AG04450 (cell line): ENCODE measurements at regions of chr3 and their contacts with region 1.

Region 1: GRCh38 chr3:50611464-50612233 is at the start of gene CISH:
- DNase-seq: peak; percentile 86
- H3K4me3 ChIP-seq: peak within 1 kb of the TSS; percentile 81
- H3K27ac ChIP-seq: peak within 1 kb of the TSS; percentile 39
- H3K27me3 ChIP-seq: no peaks in the 10 kb centered on the region
- CTCF ChIP-seq: peak; percentile 61
- polyA plus RNA-seq, gene CISH: 2.4 and 4.1 TPM in 2 replicates

Region 2: GRCh38 chr3:50192689-50193141 is 418.9 kb before region 1 on chr3:
- CTCF ChIA-PET with region 1: no interaction called
- POLR2A ChIA-PET with region 1: no interaction called
- DNase-seq: peak; percentile 15
- H3K4me3 ChIP-seq: no peak overlapping the region
- H3K27ac ChIP-seq: no peak overlapping the region
- H3K27me3 ChIP-seq: peaks cover 36% of the 10 kb centered on the region
- CTCF ChIP-seq: peak; percentile 93

Region 3: GRCh38 chr3:50568947-50569749 is 42.5 kb before region 1 on chr3 and contains the start of gene HEMK1:
- CTCF ChIA-PET with region 1: interaction called, 436 read pairs
- POLR2A ChIA-PET with region 1: interaction called, 48 read pairs
- DNase-seq: peak; percentile 83
- H3K4me3 ChIP-seq: peak within 1 kb of the TSS; percentile 99
- H3K27ac ChIP-seq: peak within 1 kb of the TSS; percentile 81
- H3K27me3 ChIP-seq: no peaks in the 10 kb centered on the region
- CTCF ChIP-seq: no peak
- polyA plus RNA-seq, gene HEMK1: 12.1 and 15.5 TPM in 2 replicates

Region 4: DNA sequence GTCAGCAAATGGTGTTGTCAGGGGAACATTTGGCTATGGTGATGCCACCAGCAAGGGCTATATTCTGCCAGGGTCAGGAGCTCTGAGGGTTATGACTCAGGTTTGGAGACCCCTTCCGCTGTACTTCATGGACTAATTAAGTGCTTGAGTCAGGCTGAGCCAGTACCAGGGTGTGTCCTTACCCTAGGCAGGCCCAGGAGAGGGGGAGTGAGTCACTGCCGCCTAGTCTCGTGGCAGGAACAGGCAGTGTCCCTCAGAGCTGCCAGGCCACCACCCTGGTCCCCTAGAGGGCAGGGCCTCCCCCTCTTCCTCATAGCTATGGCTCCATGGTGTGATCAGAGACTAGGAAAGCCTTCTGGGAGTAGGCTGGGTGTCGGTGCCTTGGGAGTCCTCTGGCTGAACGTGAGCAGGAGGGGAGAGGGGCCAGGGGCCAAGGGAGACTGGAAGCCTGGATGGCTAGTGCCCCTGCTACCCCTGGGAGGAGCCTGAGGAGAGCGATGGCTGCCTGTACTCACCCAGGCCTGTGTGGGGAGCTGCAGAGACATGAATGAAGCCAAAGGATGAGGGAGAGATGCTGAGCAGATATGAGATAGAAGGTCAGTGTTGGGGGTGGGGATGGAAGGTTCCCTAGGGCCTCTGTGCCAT is 15.9 kb after region 1 on chr3:
- CTCF ChIA-PET with region 1: interaction called, 22 read pairs
- POLR2A ChIA-PET with region 1: no interaction called
- DNase-seq: no peak
- H3K4me3 ChIP-seq: no peak overlapping the region
- H3K27ac ChIP-seq: no peak overlapping the region
- H3K27me3 ChIP-seq: no peaks in the 10 kb centered on the region
- CTCF ChIP-seq: peak; percentile 39; the same call in 1 of the 2 replicates

Region 5: GRCh38 chr3:51099794-51100535 is 488.3 kb after region 1 on chr3:
- CTCF ChIA-PET with region 1: interaction called, 52 read pairs
- POLR2A ChIA-PET with region 1: no interaction called
- DNase-seq: peak; percentile 18
- H3K4me3 ChIP-seq: no peak overlapping the region
- H3K27ac ChIP-seq: no peak overlapping the region
- H3K27me3 ChIP-seq: no peaks in the 10 kb centered on the region
- CTCF ChIP-seq: peak; percentile 91

Region 6: DNA sequence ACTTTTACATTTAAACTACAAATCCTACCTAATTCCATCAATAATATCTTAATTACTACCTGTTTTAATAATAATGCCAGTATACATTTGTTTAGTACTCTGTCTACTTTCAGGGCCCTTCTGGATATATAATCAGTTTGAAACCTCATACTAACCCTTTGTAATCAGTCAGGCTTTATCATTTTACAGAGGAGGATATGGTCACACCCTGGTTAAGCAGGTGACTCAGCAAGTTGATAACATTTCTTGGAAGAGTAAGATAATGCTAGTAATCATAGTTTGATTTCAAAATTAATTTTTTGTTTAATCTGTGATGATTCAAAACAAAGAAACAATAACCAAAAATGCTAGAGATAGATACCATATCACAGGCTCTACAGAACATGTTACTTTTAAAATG is 565.3 kb after region 1 on chr3:
- CTCF ChIA-PET with region 1: no interaction called
- POLR2A ChIA-PET with region 1: no interaction called
- DNase-seq: no peak
- H3K4me3 ChIP-seq: no peak overlapping the region
- H3K27ac ChIP-seq: no peak overlapping the region
- H3K27me3 ChIP-seq: no peaks in the 10 kb centered on the region
- CTCF ChIP-seq: no peak

Region 7: GRCh38 chr3:51379301-51379700 is 767.7 kb after region 1 on chr3:
- CTCF ChIA-PET with region 1: interaction called, 39 read pairs
- POLR2A ChIA-PET with region 1: no interaction called
- DNase-seq: no peak
- H3K4me3 ChIP-seq: no peak overlapping the region
- H3K27ac ChIP-seq: no peak overlapping the region
- H3K27me3 ChIP-seq: peaks cover 1% of the 10 kb centered on the region
- CTCF ChIP-seq: no peak